Activated CD4-positive, alpha-beta T cell treated with anti-CD3 and anti-CD28 coated beads, Interleukin-2, amount 10 ng/mL, durations not matched to agents 24 days and 14 days (primary cell): ENCODE measurements at regions of chr1 and their contacts with region 1.

Region 1: DNA sequence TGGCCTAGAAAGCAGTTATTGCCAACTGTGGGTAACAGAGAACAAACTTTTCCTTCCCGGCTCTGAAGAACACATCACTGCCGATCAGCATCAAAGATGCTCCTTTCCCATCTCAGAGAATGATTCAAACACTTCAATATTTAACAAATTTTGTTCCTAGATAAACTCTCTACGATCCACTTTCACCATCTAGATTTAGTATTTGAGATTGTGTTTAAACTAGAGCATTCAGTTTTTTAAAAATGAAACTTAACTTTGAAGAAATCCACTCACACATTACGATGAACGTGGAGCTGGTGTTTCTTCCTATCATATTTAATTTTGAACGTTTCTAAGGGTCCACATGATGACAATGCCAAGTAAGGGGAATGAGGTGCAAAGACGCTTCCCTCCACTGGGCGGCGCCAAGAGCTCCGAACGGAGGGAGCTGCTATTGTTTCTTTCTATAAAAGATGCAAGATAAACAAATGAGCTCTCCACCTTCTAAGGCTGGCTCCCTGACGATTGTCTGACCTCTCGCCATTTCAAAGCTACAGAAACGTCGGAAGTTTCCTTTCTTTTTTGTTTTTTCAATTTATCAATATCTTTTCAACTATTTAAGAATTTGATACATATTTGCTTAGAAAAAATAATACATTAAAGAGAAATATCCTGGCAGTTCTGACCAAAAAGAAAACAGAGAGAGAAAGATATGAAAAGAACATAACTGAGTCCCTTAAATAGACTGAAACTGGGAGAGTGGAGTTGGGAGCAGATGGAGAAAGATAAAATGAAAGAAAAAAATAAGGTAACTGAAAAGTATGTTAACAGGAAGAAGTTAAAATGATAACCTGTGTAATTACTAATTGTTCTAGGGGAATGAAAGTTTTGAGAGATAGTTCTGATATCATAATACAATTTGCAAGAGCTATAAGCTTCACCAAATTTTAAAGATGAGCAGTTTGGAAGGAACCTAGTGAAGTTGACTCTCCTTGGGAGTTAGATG is 4.4 kb upstream of the BARHL2 start:
- DNase-seq: peak; percentile 88
- H3K4me3 Mint-ChIP-seq: no peak overlapping the region
- H3K27ac Mint-ChIP-seq: no peak overlapping the region
- H3K4me1 Mint-ChIP-seq: peaks cover 38% of the 10 kb centered on the region
- H3K27me3 Mint-ChIP-seq: peaks cover 88% of the 10 kb centered on the region

Region 2: DNA sequence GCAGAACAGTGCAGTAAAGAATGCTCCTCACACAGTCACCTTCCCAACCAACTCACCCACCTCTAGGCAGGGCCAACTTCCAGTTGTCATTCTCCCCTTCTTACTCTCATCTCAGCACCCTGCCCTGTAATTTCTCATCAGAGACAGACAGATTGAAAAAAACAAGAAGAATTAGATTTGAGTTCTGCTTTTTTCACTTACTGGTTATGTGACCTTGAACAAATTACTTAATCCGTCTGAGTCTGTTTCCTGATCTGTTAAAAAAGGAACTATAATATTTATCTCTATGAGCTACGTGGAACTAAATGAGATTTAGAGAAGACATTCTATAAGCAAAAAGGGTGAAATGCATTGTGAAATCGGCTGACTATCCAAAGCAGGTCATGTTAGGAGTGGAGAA is 396.3 kb before region 1 on chr1:
- intact Hi-C with region 1: no loop called
- DNase-seq: no peak
- H3K4me3 Mint-ChIP-seq: no peak overlapping the region
- H3K27ac Mint-ChIP-seq: no peak overlapping the region
- H3K4me1 Mint-ChIP-seq: no peaks in the 10 kb centered on the region
- H3K27me3 Mint-ChIP-seq: no peaks in the 10 kb centered on the region

Region 3: DNA sequence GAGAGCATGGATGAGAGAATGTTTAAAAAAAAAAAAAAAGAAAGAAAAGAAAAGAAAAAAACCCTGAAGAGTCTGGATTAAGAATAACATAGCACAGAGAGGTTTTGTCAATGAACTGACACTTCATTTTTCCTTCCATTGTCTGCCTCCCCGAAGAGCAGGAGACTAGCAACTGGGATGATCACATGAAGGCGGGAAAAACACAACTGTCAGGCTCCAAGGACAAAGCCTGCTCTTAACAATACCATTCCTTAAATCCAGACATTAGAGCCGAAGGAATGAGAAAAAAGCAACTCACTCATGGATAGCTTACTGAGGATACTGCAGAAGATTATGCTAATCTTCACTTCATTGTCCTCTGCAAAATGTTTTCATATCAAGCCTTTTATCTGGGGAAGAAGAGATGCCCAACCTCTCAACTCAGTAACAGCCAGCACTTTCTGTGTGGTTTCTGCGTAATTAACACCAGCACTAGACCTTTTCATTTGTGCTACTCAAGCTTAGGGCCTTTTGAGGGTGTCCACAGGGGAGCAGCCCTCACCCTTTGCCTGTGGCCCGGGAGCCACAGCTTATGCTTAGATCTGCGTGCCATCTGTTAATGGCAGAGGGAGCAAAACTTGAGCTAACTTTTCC is 186.7 kb before region 1 on chr1:
- intact Hi-C with region 1: no loop called
- DNase-seq: no peak
- H3K4me3 Mint-ChIP-seq: no peak overlapping the region
- H3K27ac Mint-ChIP-seq: no peak overlapping the region
- H3K4me1 Mint-ChIP-seq: no peaks in the 10 kb centered on the region
- H3K27me3 Mint-ChIP-seq: peaks cover 5% of the 10 kb centered on the region

Region 4: GRCh38 chr1:90640325-90640724 is 81.2 kb before region 1 on chr1:
- intact Hi-C with region 1: no loop called
- DNase-seq: no peak
- H3K4me3 Mint-ChIP-seq: no peak overlapping the region
- H3K27ac Mint-ChIP-seq: no peak overlapping the region
- H3K4me1 Mint-ChIP-seq: no peaks in the 10 kb centered on the region
- H3K27me3 Mint-ChIP-seq: no peaks in the 10 kb centered on the region

Region 5: DNA sequence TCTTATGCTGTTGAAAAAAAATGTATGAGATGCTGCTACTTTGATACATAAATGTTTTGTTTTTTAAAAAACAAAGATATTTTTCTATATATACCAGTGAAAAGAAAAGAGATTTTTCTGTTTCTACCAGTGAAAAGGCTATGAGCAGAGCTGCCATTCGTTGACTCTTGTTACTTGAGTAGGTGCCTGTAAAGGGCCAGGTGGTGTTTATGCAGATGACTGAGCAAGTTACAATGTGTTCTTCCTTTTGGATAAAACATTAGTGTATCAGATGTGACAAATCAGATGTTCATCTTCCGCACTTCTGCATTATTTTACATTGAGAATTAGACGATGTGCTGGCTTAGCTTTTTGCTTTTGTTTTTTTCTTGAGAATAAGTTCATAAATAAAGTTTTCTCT is 49.8 kb before region 1 on chr1:
- intact Hi-C with region 1: no loop called
- DNase-seq: no peak
- H3K4me3 Mint-ChIP-seq: no peak overlapping the region
- H3K27ac Mint-ChIP-seq: no peak overlapping the region
- H3K4me1 Mint-ChIP-seq: no peaks in the 10 kb centered on the region
- H3K27me3 Mint-ChIP-seq: no peaks in the 10 kb centered on the region

Region 6: GRCh38 chr1:90964444-90965035 is 243.0 kb after region 1 on chr1:
- intact Hi-C with region 1: loop called (anchors 2 kb)
- DNase-seq: no peak
- H3K4me3 Mint-ChIP-seq: no peak overlapping the region
- H3K27ac Mint-ChIP-seq: no peak overlapping the region
- H3K4me1 Mint-ChIP-seq: peaks cover 9% of the 10 kb centered on the region
- H3K27me3 Mint-ChIP-seq: no peaks in the 10 kb centered on the region